ENCODE measurements at regions of chr7 and their contacts with region 1.

Region 1: GRCh38 chr7:37181550-37181932 is 267.1 kb downstream of the ELMO1 start:
- DNase-seq: no peak
- ATAC-seq: peak; percentile 38

Region 2: GRCh38 chr7:36473454-36474282 is 707.9 kb before region 1 on chr7:
- intact Hi-C with region 1: loop called in 1 of 2 experiments (anchors 10 kb)
- DNase-seq: peak in 1 of 2 donors; percentile 79
- ATAC-seq: peak; percentile 77

Region 3: DNA sequence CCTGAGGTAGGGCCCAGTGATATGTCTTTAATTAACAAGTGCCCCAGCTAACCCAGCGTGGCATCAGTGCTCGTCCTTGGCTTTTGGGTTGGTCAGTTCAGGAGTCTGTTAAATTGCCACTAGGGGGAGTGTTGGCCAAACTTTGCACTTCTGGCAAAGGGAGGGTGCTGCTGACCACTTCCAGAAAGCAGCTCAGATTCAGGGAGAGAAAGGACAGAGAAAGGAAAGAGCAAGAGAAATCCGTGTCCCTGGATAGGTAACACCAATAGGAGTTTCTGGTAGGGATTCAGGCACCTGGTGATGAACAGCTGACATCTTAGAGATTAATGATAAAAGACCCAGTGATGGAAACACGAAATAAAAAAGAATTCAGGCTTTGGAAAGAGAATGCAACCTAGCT is 214.2 kb before region 1 on chr7:
- intact Hi-C with region 1: loop called in 1 of 2 experiments (anchors 5 kb)
- DNase-seq: peak; percentile 18 to 35
- ATAC-seq: peak; percentile 44